HEK293 (cell line): ENCODE measurements at regions of chr5 and their contacts with region 1.

Region 1: DNA sequence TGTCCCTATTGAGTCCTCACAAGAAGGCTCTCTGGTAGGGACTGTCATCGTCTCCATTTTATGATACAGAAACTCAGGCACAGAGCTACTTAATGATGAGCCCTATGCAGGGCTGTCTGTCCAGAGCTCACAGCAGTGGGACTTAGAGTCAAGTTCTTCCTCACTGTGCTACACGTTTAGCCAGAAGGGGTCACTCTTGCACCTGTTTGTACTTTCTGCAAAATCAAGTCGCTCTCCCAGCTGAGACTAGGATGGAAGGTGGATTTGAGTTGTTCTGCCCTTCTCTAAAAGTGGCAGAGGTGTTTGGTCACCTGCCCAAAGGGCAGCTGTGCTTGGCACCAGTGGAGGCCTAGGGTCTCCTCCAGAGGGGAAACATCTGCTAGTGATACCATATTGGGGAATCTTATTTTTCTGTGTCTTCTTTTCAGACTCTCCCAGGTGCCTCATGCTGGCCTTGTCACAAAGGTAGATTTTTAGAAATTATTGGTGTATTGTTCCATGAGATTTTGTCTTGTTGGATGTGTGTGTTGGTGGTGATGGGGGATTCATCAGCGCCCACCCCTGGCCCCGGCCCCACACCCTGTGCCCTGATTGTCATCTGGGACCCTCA is 104.2 kb downstream of the PPARGC1B start:
- H3K4me3 ChIP-seq: no peak overlapping the region
- H3K27ac ChIP-seq: no peak overlapping the region
- H3K4me1 ChIP-seq: no peaks in the 10 kb centered on the region
- CTCF ChIP-seq: peak; percentile 56

Region 2: DNA sequence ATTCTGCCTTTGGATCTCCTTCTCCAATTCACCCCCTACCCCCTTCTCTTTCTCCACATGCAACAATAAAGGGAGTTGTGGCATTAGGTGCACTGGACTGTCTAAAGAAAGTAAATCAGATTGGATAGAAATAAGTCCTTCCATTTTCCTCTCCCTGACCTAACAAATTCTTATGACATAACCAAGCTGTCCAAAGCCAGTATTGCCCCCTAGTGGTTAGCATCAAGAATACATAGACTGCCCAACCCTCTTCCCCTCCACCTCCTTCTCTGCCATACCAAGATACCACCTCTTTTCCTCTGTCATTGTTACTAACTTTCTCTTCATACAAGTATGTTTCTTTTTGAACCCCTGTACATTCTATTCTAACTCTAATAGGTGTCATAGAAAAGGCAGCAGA is 58.6 kb before region 1 on chr5:
- CTCF ChIA-PET with region 1: interaction called, 11 read pairs
- POLR2A ChIA-PET with region 1: no interaction called
- H3K4me3 ChIP-seq: no peak overlapping the region
- H3K27ac ChIP-seq: no peak overlapping the region
- H3K4me1 ChIP-seq: no peaks in the 10 kb centered on the region
- CTCF ChIP-seq: 0 out of 2 replicates have a peak, but pooled peaks have one; percentile 20

Region 3: DNA sequence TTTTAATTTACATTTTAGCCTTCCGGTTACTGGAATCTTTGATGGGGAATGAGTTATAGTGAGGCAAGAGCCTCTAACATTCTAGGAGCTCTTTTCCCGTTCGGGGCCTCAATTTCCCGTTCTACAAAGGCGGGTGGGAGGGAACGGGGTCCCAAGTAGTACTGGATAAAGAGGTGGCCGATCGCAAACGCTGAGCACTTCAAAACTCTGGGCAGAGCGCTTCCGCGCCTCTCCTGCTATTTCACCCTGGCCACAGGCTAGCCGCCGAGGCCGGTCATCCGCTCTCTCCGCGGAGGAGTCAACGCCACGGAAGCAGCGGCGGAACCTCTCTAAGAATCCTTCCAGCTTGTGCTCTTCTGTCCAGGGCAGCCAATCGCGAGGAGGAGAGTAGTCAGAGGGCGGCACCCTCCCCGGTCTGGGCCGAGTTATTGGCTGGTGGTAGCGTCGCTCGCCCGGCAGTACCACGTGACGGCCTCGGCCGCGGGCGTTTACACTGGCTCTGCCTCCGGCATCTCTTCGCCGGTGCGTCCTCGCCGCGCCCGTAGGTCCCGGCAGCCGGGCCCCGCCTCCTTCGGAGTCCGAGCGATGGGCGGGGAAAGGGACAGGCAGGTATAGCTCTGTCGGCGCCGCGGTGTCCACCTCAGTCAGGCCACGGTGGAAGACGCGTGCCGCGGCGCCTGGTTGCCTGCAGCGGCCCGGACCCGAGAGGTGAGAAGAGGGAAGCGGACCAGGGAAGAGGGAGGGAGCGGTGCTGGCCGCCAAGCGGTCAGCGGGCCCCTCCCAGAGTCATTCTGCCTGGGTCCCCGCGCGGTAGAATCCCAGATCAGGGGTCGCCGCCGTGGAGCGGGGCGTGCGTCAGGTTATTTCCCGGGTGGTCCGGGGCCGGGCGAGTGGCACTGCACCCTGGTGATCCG is 126.2 kb after region 1 on chr5 and contains the start of gene SLC26A2:
- CTCF ChIA-PET with region 1: interaction called, 175 read pairs
- POLR2A ChIA-PET with region 1: interaction called, 9 read pairs
- H3K4me3 ChIP-seq: peak within 1 kb of the TSS; percentile 72
- H3K27ac ChIP-seq: peak within 1 kb of the TSS; percentile 54; the same call in 1 of the 2 replicates
- H3K4me1 ChIP-seq: peaks cover 7% of the 10 kb centered on the region; the same call in 1 of the 2 replicates
- CTCF ChIP-seq: peak; percentile 77

Region 4: GRCh38 chr5:149979896-149980295 is 145.5 kb after region 1 on chr5:
- CTCF ChIA-PET with region 1: interaction called, 29 read pairs
- POLR2A ChIA-PET with region 1: no interaction called
- H3K4me3 ChIP-seq: no peak overlapping the region
- H3K27ac ChIP-seq: no peak overlapping the region
- H3K4me1 ChIP-seq: no peaks in the 10 kb centered on the region
- CTCF ChIP-seq: no peak

Region 5: DNA sequence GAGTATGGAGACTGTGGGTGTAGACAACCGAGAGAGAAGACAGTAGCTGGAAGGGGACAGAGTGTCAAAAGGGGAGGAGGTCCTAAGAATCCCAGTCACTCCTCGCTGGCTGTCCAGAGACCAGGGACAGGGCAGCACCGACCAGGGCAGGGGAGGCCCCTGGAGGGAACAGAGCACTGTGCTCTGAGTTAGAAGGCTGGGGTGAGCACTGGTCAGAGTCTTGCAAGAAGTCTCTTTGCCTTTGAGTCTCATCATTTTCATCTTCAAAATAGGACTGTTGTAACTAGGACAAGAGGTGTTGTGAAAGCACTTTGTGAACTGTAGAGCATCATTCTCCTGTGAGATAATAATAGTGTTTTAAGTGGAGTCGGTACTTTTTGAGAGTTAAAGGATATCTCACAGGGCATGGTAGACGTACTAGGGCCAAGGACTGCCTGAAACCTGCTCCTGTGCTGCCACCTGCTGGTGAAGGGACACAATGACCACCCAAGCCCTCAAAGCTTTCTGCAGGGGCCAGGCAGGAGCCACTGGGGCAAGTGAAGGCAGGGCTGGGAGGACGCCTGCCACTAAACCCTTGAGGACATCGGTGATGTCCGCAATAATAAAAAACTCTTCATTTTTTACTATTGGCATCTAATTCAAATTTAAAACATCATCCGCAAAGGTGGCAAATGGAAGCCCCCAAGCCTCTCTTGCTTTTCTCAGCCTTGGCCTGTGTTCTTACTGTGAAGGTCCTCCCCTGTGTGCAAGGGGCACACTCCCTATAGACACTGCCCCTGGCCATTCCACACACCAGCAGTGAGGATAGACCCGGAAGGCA is 383.7 kb after region 1 on chr5:
- CTCF ChIA-PET with region 1: interaction called, 14 read pairs
- POLR2A ChIA-PET with region 1: no interaction called
- H3K4me3 ChIP-seq: no peak overlapping the region
- H3K27ac ChIP-seq: no peak overlapping the region
- H3K4me1 ChIP-seq: no peaks in the 10 kb centered on the region
- CTCF ChIP-seq: peak; percentile 81